Activated B cell treated with CpG ODN at 0.5 μM for 24 hours (primary cell): ENCODE measurements at regions of chr1 and their contacts with region 1.

Region 1: GRCh38 chr1:66282343-66282852 is 251.6 kb upstream of the SGIP1 start:
- DNase-seq: no peak
- ATAC-seq: peak; percentile 82
- H3K4me3 Mint-ChIP-seq: peak overlapping the region; percentile 75
- H3K27ac Mint-ChIP-seq: peak overlapping the region; percentile 98
- H3K4me1 Mint-ChIP-seq: peaks cover 91% of the 10 kb centered on the region
- H3K27me3 Mint-ChIP-seq: no peaks in the 10 kb centered on the region
- CTCF ChIP-seq: no peak

Region 2: GRCh38 chr1:66271216-66271903 is 11.0 kb before region 1 on chr1:
- CTCF ChIA-PET with region 1: interaction called, 4 read pairs
- POLR2A ChIA-PET with region 1: interaction called, 3 read pairs
- intact Hi-C with region 1: loop called (anchors 1 kb)
- DNase-seq: no peak
- ATAC-seq: peak; percentile 78
- H3K4me3 Mint-ChIP-seq: peak overlapping the region; percentile 57
- H3K27ac Mint-ChIP-seq: peak overlapping the region; percentile 81
- H3K4me1 Mint-ChIP-seq: peaks cover 51% of the 10 kb centered on the region
- H3K27me3 Mint-ChIP-seq: no peaks in the 10 kb centered on the region
- CTCF ChIP-seq: no peak

Region 3: GRCh38 chr1:66300972-66301451 is 18.6 kb after region 1 on chr1:
- CTCF ChIA-PET with region 1: interaction called, 3 read pairs
- POLR2A ChIA-PET with region 1: interaction called, 10 read pairs
- intact Hi-C with region 1: loop called (anchors 1 kb)
- DNase-seq: no peak
- ATAC-seq: peak; percentile 82
- H3K4me3 Mint-ChIP-seq: peak overlapping the region; percentile 79
- H3K27ac Mint-ChIP-seq: peak overlapping the region; percentile 72
- H3K4me1 Mint-ChIP-seq: peaks cover 22% of the 10 kb centered on the region
- H3K27me3 Mint-ChIP-seq: no peaks in the 10 kb centered on the region
- CTCF ChIP-seq: no peak

Region 4: DNA sequence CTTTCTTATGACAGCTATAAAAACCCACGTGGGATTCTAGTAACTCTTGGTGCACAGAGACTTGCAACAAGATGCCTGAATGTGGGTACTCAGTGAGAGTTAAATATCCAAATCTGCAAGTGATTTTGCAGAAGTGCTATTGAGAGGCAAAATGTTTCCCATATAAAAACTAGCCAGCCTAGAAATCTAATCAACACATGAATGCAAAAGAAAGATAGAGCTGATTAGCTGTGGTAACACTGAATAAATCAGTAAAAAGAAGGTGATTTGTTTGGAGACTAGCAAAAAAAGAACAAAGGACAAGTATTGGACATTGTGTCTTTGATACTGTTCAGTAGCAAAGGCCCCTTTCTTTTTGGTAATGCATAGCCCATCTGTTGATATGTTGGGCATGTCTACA is 37.8 kb after region 1 on chr1:
- CTCF ChIA-PET with region 1: no interaction called
- POLR2A ChIA-PET with region 1: no interaction called
- intact Hi-C with region 1: no loop called
- DNase-seq: no peak
- ATAC-seq: no peak
- H3K4me3 Mint-ChIP-seq: no peak overlapping the region
- H3K27ac Mint-ChIP-seq: no peak overlapping the region
- H3K4me1 Mint-ChIP-seq: peaks cover 15% of the 10 kb centered on the region
- H3K27me3 Mint-ChIP-seq: no peaks in the 10 kb centered on the region
- CTCF ChIP-seq: no peak

Region 5: DNA sequence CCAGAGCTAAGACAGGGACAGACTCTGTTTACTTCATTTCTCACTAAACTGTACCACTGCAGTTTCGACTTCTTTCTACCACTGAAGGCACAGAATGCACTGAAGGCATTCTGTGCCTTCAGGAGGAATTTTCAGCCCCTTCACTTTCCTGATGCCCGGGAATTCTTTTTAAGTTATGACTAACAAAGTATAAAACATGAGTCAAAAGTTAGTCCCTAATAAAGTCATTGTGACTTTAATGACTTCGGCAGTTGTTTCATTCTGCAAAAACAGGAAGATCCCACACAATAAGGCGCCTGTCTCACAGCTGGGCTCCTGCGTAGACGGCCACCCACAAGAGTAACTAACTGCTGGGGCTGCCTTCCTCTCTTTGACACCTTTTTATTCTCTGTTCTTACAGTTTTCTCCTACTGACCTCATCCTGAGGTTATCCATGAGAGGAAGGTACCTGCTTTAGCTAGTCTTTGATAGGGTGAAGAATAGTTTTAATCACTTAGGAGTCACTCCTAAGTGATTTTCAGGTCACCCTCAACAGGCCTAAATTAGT is 67.7 kb after region 1 on chr1:
- CTCF ChIA-PET with region 1: interaction called, 12 read pairs
- POLR2A ChIA-PET with region 1: interaction called, 11 read pairs
- intact Hi-C with region 1: no loop called
- DNase-seq: no peak
- ATAC-seq: peak; percentile 80
- H3K4me3 Mint-ChIP-seq: peak overlapping the region; percentile 72
- H3K27ac Mint-ChIP-seq: peak overlapping the region; percentile 89
- H3K4me1 Mint-ChIP-seq: peaks cover 97% of the 10 kb centered on the region
- H3K27me3 Mint-ChIP-seq: no peaks in the 10 kb centered on the region
- CTCF ChIP-seq: no peak

Region 6: GRCh38 chr1:66380452-66381212 is 98.2 kb after region 1 on chr1:
- CTCF ChIA-PET with region 1: interaction called, 6 read pairs
- POLR2A ChIA-PET with region 1: interaction called, 37 read pairs
- intact Hi-C with region 1: loop called (anchors 1 kb)
- DNase-seq: peak; percentile 59
- ATAC-seq: peak; percentile 98
- H3K4me3 Mint-ChIP-seq: peak overlapping the region; percentile 72
- H3K27ac Mint-ChIP-seq: peak overlapping the region; percentile 92
- H3K4me1 Mint-ChIP-seq: peaks cover 87% of the 10 kb centered on the region
- H3K27me3 Mint-ChIP-seq: no peaks in the 10 kb centered on the region
- CTCF ChIP-seq: no peak

Region 7: DNA sequence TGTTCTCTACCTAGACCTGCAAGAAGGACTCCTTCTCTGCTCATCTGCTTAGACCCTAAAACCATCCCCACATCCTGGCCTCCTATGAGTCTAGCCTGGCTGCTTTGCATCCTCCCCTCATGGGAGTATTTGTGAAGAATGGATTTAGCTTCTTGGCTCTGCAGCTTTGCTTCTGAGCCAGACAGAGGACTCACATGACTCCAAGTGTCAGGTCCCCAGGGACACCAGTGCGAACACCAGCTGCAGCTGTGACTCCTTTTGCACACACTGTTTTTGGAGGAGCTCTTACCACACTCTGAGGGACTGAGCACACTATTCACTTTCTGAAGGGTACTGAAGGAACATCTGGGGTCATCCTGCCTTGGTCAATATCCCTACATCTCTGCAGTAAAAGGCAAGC is 119.8 kb after region 1 on chr1:
- CTCF ChIA-PET with region 1: interaction called, 6 read pairs
- POLR2A ChIA-PET with region 1: interaction called, 32 read pairs
- intact Hi-C with region 1: loop called (anchors 1 kb)
- DNase-seq: peak; percentile 65
- ATAC-seq: peak; percentile 86
- H3K4me3 Mint-ChIP-seq: peak overlapping the region; percentile 72
- H3K27ac Mint-ChIP-seq: peak overlapping the region; percentile 90
- H3K4me1 Mint-ChIP-seq: peaks cover 67% of the 10 kb centered on the region
- H3K27me3 Mint-ChIP-seq: no peaks in the 10 kb centered on the region
- CTCF ChIP-seq: no peak